Posterior cingulate gyrus (tissue), 11 donors: ENCODE measurements at regions of chr1 and their contacts with region 1.

Region 1: GRCh38 chr1:31422505-31423319 is 9.7 kb downstream of the SERINC2 start:
- DNase-seq: peak in 8 of 10 donors; percentile 48 to 91 (median 78)

Region 2: GRCh38 chr1:31159869-31160611 is 262.7 kb before region 1 on chr1:
- intact Hi-C with region 1: loop called (anchors 5 kb)
- DNase-seq: peak in 2 of 10 donors; percentile 7 to 54

Region 3: GRCh38 chr1:31216016-31216415 is 206.7 kb before region 1 on chr1:
- intact Hi-C with region 1: no loop called
- DNase-seq: peak in 7 of 10 donors; percentile 13 to 88 (median 56)

Region 4: GRCh38 chr1:31394628-31395193 is 28.0 kb before region 1 on chr1:
- intact Hi-C with region 1: loop called (anchors 1 kb)
- DNase-seq: peak; percentile 57 to 97 (median 85)